ENCODE measurements at regions of chr3 and their contacts with region 1.

Region 1: GRCh38 chr3:9715764-9716437 is 12.3 kb downstream of the CPNE9 start:
- DNase-seq: peak; percentile 96
- ATAC-seq: peak; percentile 98
- H3K4me3 ChIP-seq: no peak overlapping the region
- H3K27ac ChIP-seq: no peak overlapping the region
- H3K4me1 ChIP-seq: peaks cover 7% of the 10 kb centered on the region
- H3K27me3 ChIP-seq: peaks cover 23% of the 10 kb centered on the region
- CTCF ChIP-seq: peak; percentile 98

Region 2: DNA sequence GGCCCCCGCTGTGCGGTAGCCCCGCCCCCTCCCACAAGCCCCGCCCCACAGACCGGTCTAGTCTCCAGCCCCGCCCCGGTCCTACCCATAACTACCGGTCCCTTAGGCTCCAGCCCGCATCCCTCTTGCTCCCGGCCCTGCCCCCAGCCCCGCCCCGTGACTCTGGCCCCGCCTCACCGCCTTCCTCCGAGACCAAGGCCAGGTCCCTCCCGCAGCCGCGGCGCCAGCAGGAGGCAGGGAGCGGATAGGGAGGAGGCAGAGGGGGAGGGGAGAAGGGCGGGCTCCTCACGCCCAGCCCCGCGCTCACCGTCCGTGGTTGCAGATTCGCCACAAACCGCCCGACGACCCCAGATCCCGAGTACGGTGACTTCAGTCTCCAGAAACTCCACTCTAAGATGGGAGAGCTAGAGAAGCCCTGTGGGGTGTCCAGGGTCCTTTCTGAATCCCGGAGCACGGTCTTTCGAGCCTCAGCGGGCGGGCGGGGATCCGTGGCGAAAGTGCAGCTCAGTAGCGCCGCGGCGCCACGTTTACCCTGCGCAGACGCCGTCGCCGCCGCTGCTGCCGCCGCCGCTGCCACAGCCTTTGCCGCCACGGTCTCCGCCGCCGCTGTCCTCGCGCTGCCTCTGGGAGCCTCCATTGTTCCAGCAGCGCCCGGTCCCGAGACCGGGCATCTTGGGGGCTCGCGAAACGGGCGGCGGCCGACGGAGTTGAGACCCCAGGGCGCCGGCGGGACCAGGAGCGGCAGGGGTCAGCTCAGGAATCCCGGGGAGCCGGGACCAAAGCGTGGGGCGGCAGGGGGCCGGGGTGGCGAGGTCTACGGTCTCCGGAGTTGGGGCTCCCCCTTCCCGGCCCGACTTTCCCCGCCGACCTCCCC is 15.5 kb after region 1 on chr3 and contains the start of gene BRPF1:
- CTCF ChIA-PET with region 1: interaction called, 6 read pairs
- POLR2A ChIA-PET with region 1: interaction called, 6 read pairs
- intact Hi-C with region 1: loop called (anchors 1 kb)
- DNase-seq: peak; percentile 98
- ATAC-seq: peak; percentile 96
- H3K4me3 ChIP-seq: peak within 1 kb of the TSS; percentile 89
- H3K27ac ChIP-seq: peak within 1 kb of the TSS; percentile 92
- H3K4me1 ChIP-seq: peaks cover 23% of the 10 kb centered on the region
- H3K27me3 ChIP-seq: no peaks in the 10 kb centered on the region
- CTCF ChIP-seq: no peak
- total RNA-seq, gene BRPF1: 27.0 and 29.8 TPM in 2 replicates

Region 3: DNA sequence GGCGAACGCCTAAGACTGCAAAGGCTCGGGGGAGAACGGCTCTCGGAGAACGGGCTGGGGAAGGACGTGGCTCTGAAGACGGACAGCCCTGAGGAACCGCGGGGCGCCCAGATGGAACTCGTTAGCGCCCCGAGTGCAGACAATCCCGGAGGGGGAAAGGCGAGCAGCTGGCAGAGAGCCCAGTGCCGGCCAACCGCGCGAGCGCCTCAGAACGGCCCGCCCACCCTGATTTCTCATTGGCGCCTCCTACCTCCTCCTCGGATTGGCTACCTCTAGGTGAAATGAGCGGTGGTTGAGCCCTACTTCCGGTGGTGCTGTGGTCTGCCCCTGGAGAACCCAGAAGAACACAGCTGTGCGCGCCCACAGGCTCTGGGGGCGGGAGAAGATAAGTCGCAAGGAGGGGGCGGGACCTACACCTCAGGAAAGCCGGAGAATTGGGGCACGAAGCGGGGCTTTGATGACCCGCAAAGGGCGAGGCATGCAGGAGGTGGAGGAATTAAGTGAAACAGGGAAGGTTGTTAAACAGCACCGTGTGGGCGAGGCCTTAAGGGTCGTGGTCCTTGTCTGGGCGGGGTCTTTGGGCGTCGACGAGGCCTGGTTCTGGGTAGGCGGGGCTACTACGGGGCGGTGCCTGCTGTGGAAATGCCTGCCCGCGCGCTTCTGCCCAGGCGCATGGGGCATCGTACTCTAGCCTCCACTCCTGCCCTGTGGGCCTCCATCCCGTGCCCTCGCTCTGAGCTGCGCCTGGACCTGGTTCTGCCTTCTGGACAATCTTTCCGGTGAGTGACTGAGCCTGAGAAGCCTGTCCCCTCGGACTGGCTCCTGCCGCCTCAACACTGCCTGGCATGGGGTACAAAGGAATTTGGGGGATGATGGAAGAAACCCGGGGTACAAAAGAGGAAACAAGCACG is 34.0 kb after region 1 on chr3 and contains the start of gene OGG1:
- CTCF ChIA-PET with region 1: no interaction called
- POLR2A ChIA-PET with region 1: no interaction called
- intact Hi-C with region 1: loop called (anchors 1 kb)
- DNase-seq: peak; percentile 98
- ATAC-seq: peak; percentile 91
- H3K4me3 ChIP-seq: peak within 1 kb of the TSS; percentile 83
- H3K27ac ChIP-seq: peak within 1 kb of the TSS; percentile 46
- H3K4me1 ChIP-seq: peaks cover 28% of the 10 kb centered on the region
- H3K27me3 ChIP-seq: no peaks in the 10 kb centered on the region
- CTCF ChIP-seq: no peak
- total RNA-seq, gene OGG1: 38.7 and 47.3 TPM in 2 replicates

Region 4: GRCh38 chr3:9769426-9770275 is 53.8 kb after region 1 on chr3 and contains the start of gene CAMK1:
- CTCF ChIA-PET with region 1: interaction called, 3 read pairs
- POLR2A ChIA-PET with region 1: no interaction called
- intact Hi-C with region 1: loop called (anchors 10 kb)
- DNase-seq: peak; percentile 79
- ATAC-seq: peak; percentile 92
- H3K4me3 ChIP-seq: peak within 1 kb of the TSS; percentile 80
- H3K27ac ChIP-seq: no peak within 1 kb of the TSS
- H3K4me1 ChIP-seq: peaks cover 25% of the 10 kb centered on the region
- H3K27me3 ChIP-seq: no peaks in the 10 kb centered on the region
- CTCF ChIP-seq: no peak
- total RNA-seq, gene CAMK1: 36.6 and 53.2 TPM in 2 replicates

Region 5: DNA sequence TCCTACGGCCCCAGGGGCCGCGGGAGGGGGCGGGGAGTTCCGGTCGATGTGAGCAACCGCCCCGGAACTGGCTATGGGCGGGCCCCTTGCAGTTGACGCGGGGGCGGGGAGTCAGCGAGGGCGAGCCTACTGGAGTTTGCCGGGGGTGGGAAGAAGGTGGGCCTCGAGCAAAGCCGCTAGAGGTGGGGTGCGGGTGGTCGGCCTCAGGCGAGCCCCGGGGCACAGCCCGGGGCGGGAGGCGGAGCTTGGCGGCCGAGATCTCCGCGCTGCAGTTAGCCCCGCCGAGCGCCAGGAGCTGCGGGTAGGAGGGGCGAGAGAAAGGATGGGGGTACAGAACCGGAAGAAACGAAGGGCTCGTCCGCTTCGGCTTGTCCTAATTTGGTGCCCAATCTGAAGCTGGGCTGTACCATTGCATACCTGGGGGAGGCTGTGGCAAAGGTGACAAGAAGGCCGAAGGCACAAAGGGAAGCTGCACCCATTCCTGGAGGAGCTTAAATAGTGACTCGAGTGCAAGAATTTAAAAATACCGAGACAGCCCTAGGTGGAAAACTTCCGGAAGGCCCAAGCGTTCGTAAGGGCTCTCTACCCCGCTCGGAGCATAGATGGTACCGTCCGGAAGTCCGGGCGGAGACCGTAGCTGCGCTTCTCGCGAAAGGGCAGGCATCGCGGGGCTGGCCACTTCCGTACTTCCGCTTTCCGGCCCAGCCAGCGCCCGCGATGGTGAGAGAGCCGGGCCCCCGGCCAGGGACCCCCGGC is 76.7 kb after region 1 on chr3 and contains the starts of genes ARPC4 and TADA3:
- CTCF ChIA-PET with region 1: no interaction called
- POLR2A ChIA-PET with region 1: no interaction called
- intact Hi-C with region 1: loop called (anchors 5 kb)
- DNase-seq: peak; percentile 90
- ATAC-seq: peak; percentile 88
- H3K4me3 ChIP-seq: peak within 1 kb of the TSS; percentile 99
- H3K27ac ChIP-seq: peak within 1 kb of the TSS; percentile 79
- H3K4me1 ChIP-seq: peaks cover 11% of the 10 kb centered on the region
- H3K27me3 ChIP-seq: no peaks in the 10 kb centered on the region
- CTCF ChIP-seq: no peak
- total RNA-seq, gene ARPC4: 131 and 223 TPM in 2 replicates
- total RNA-seq, gene TADA3: 85.4 and 85.9 TPM in 2 replicates

Region 6: DNA sequence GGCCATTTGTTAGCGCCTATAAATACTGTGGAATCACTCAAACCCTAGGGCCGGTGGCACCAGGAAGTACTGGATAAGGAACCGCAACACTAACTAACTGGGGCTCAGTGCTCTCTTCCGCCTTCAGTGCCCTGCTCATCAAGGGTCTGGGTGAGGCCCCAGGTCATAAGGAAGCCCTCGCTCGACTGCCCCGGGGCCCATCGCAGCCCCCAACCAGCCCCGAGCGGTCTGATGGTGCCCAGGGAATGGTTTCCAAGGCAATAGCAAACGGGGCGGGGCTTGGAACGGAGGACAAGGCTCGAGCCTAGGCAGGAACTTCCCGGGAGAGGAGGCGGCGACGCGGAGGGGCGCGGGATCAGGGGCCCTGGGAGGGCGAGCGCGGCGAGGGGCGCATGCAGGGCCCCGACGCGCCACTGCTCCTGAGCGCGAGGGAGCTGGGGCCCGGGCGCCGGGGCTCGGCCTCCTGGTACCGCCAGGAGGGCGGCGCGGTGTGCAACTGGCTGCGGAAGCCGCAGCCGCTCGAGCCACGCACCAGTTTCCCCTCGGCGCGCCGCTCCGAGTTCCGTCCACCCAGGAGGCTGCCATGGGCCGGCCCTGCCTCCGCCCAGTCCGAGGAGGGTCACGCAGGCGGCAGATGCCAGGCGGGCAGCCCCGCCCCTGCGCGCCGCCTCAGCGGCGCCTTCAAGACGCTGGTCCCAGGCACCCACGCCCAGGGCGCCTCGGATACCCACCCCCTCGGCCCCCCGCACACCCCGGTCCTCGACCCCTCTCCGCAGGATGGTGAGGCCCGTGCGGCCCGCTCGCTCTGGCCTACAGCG is 93.9 kb after region 1 on chr3 and contains the start of gene TTLL3:
- CTCF ChIA-PET with region 1: no interaction called
- POLR2A ChIA-PET with region 1: no interaction called
- intact Hi-C with region 1: loop called (anchors 2 kb)
- DNase-seq: peak; percentile 60
- ATAC-seq: peak; percentile 80
- H3K4me3 ChIP-seq: peak within 1 kb of the TSS; percentile 80
- H3K27ac ChIP-seq: peak within 1 kb of the TSS; percentile 20
- H3K4me1 ChIP-seq: peaks cover 19% of the 10 kb centered on the region
- H3K27me3 ChIP-seq: no peaks in the 10 kb centered on the region
- CTCF ChIP-seq: no peak
- total RNA-seq, gene TTLL3: 8.4 and 11.6 TPM in 2 replicates

Region 7: GRCh38 chr3:9932843-9933560 is 217.1 kb after region 1 on chr3:
- CTCF ChIA-PET with region 1: interaction called, 3 read pairs
- POLR2A ChIA-PET with region 1: no interaction called
- intact Hi-C with region 1: loop called (anchors 5 kb)
- DNase-seq: peak; percentile 84
- ATAC-seq: peak; percentile 71
- H3K4me3 ChIP-seq: peak overlapping the region; percentile 72
- H3K27ac ChIP-seq: peak overlapping the region; percentile 84
- H3K4me1 ChIP-seq: peaks cover 33% of the 10 kb centered on the region
- H3K27me3 ChIP-seq: no peaks in the 10 kb centered on the region
- CTCF ChIP-seq: peak; percentile 84